Uterus (tissue), 4 donors: ENCODE measurements at regions of chr7 and their contacts with region 1.

Region 1: DNA sequence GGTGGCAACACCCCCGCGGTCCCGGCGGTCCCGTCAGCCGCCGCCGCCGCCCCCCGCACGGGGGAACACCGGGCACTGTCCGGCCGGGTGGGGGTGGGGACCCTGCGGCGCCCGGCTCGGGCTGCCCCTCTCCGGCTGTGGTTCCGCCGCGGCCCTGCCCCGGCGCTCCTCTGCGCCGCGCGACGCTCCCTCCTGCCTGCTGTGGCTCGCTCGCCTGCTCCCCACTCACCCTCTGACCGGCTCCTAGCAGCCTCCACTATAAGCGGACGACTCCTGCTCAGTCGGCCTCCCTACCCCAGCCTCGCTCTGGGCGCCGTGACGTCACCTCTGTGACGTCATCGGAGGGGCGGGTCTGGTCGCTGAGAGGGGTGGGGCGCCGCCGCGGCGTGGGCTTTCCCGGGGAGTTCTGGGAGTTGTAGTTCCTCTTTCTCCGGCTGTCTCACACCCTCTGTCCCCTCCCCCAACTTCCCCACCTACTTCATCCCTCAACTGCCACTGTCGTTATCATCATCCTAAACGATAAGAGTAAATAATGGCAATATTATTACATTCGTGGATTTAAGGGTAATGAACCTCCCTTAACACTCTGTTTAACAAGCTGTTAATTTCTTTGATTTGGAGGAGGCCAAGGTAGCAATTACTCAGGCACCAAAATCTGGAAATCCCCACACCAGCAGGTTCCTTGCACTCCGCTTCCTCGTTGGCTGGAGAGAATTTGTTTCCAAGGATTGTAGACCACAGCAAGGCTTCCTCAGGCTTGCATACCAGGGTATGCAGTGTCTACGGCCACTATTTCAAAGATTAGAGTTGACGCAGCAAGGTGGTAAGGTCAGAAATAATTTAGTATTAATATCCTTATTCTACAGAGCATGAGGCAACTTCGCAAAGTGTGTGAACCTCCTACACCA is at the start of gene UBE2H:
- DNase-seq: peak; percentile 90 to 93
- H3K4me3 ChIP-seq: peak within 1 kb of the TSS; percentile 63 to 74
- H3K27ac ChIP-seq: peak within 1 kb of the TSS; percentile 92 to 96
- H3K4me1 ChIP-seq: peaks cover 0 to 5% of the 10 kb centered on the region in 2 donors
- H3K27me3 ChIP-seq: no peaks in the 10 kb centered on the region
- CTCF ChIP-seq: peak in 1 of 4 experiments; percentile 49
- POLR2A ChIP-seq: peak; percentile 99 to 100
- total RNA-seq, gene UBE2H: 35.4 to 99.8 (median 53.1) TPM

Region 2: DNA sequence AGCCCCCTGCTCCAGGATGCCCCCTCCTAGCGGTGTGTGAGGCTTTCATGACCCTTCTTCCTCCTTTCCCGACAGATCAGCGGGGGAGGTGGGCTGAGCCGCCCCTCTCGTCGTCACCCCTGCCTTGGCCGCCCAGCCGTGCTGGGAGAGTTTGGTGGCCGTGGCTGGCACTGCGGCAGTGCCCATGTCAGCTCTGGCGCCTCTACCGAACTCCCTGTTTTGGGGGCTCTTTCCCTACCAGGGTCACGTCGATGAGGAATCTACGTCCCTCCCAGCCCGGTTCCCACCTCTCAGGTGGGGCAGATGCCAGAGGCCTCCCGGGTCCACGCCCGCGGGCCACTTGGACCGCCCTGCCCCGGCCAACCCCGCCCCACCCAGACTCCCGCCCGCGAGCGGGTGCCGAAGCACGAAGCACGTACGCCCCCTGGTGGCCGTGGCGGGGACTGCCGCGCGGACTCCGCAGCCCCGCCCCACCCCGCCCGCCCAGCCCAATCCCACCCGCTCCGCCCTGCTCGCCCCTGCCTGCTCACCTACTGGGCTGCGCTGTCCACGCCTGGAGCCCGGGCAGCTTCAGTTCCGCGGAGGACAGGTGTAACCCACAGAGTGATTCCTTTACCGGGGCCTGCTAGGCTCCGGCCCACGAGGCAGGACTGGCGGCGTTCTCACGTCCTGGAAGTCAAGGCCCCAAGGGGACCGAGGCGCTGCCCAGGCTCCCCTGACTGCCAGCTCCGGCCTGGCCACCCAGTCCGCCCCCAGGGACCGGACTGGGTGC is 127.2 kb before region 1 on chr7:
- intact Hi-C with region 1: loop called (anchors 5 kb)
- DNase-seq: peak; percentile 84 to 88
- H3K4me3 ChIP-seq: peak overlapping the region; percentile 44 to 61
- H3K27ac ChIP-seq: peak overlapping the region; percentile 62 to 64
- H3K4me1 ChIP-seq: peaks cover 0 to 6% of the 10 kb centered on the region in 2 donors
- H3K27me3 ChIP-seq: no peaks in the 10 kb centered on the region
- CTCF ChIP-seq: peak; percentile 52 to 99 (median 74)
- POLR2A ChIP-seq: peak in 1 of 2 donors; percentile 23

Region 3: DNA sequence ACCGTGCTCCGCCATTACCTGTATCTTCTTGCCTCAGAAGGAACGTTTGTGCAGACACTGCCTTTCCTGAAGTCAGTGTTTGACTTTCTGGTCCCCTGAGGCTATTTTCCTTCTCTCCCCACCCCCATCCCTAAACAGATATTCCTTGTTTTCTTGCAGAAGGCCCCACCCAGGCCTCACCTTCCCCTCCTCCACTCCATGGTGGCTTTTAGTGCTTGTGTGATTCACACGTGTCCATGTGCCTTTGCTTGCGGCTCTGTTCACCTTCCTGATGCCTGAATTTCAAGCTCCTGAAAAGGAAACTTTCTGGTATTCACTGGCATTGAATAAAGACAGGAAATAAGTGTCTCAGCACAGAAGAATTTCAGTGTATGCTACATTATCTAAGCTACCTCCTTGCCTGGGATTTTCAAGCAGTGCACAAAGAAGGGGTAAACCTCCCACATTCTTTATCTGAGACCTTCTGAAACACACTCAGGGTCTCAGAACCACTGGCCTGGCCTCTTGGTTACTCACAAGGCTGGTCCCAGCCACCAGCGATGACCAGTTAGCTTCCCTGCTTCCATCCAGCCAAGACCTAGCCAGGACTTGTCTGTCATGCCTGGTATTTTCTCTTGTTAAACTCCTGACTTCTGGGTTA is 17.0 kb after region 1 on chr7:
- intact Hi-C with region 1: no loop called
- DNase-seq: peak in 1 of 2 donors; percentile 36
- H3K4me3 ChIP-seq: no peak overlapping the region
- H3K27ac ChIP-seq: peak overlapping the region in 1 of 2 donors; percentile 74
- H3K4me1 ChIP-seq: no peaks in the 10 kb centered on the region
- H3K27me3 ChIP-seq: no peaks in the 10 kb centered on the region
- CTCF ChIP-seq: no peak
- POLR2A ChIP-seq: no peak